Activated CD4-positive, alpha-beta T cell treated with anti-CD3 and anti-CD28 coated beads, Interleukin-2, amount 10 ng/mL, durations not matched to agents 7 days and 5 days (primary cell): ENCODE measurements at regions of chr11 and their contacts with region 1.

Region 1: DNA sequence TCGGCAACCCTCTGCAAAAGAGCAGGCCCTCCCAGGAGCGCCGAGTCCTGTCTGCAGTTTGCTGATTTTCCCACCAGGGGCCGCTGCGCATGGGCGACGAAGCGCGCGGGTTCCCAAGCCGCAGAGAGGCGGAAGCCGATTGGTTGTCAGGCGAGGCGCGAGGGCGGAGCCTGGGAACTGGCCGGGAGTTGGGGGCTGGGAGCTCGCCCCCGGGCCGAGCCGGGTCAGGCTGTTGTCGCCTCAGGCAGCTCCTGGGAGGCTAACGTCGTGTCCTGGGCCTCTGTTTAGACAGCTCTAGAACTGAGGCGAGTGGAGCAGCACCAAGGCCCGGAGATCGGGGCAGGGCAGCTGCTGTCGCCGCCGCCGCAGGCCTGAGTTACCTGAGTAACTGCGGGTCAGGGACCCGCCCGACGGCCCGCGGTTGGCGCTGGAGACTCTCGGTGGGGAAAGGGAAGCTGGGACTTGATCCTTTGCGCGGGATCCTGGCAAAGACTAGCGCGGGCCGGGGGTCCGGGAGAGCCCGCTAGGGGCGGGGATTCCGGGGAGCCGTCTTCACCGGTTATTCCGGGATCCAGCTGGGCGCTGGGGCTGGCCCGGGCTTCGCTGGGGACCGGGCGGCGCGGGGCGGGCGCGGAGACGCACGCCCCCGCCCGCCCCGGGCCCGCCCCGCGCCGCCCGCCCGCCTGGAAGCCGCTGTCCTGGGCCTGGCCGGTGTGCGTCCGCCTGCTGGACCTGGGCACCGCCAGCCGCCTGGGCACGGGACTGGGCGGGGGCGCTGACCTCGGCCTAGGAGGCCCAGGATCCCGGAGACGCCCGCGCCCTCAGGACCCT is at the start of gene STIM1:
- DNase-seq: peak; percentile 96
- H3K4me3 Mint-ChIP-seq: peak within 1 kb of the TSS; percentile 98
- H3K27ac Mint-ChIP-seq: peak within 1 kb of the TSS; percentile 99
- H3K4me1 Mint-ChIP-seq: peaks cover 56% of the 10 kb centered on the region
- H3K27me3 Mint-ChIP-seq: no peaks in the 10 kb centered on the region
- total RNA-seq, gene STIM1: 103 to 108 TPM

Region 2: DNA sequence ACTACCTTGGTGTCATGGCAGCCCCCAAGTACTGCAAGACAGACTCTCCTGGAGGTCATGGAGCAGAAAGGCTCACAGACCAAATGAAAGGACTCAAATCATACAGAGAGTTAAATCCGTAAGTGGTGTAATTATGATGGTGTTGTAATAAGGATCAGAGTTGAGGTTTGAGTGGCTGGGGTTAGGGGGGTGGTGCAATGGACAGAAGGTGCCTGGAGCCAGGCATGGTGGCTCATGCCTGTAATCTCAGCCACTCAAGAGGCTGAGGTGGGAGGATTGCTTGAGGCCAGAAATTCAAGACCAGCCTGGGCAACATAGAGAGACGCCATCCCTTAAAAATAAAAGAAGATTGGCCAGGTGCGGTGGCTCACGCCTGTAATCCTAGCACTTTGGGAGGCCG is 232.1 kb before region 1 on chr11:
- CTCF ChIA-PET with region 1: no interaction called
- POLR2A ChIA-PET with region 1: no interaction called
- DNase-seq: no peak
- H3K4me3 Mint-ChIP-seq: no peak overlapping the region
- H3K27ac Mint-ChIP-seq: no peak overlapping the region
- H3K4me1 Mint-ChIP-seq: no peaks in the 10 kb centered on the region
- H3K27me3 Mint-ChIP-seq: no peaks in the 10 kb centered on the region

Region 3: DNA sequence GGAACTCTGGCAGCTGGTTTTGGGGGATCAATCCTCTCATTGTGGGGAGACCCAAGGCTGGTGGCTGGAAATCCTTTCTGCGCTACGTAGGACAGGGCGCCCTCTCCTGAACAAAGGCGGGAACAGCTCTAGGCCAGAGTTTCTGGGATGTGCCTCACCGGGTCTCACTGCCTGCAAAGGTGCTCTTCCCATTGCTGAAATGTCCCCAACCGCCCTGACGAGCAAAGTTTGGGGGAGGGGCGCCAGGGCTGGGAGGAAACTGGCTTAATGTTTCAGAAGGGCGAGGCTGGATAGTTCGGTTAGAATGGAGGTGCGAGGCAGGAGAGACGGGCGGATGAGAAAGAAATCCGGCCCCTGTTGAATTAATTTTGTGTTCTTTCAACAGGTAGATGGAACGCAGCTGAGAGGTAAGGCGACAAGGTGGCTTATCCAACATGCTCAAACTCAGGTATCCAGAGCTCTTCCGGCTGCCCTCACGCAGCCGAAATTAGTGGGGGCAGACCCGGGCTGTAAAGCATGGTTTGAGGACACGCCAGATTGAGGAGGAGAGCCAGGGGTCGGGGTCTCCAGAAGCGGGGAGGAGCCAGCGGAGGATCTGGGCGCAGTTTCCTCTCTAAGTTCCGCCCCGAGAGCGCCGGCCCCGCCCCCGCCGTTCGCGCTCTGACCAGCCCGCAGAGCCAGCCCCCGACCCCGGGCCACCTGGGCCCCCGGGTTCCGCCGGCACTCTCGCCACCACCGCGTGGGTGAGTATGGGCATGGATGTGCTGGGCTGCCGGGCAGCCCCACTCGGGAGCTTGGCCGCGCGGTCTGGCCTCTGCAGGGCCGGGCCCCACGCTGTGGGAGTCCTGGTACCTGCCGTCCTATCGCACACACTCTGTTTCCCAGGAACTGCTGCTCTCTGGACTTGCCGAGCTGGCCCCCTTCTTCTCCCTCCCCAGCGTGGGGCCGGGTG is 47.0 kb before region 1 on chr11 and contains the start of gene PGAP2:
- CTCF ChIA-PET with region 1: interaction called, 13 read pairs
- POLR2A ChIA-PET with region 1: no interaction called
- DNase-seq: peak; percentile 67
- H3K4me3 Mint-ChIP-seq: peak within 1 kb of the TSS; percentile 86
- H3K27ac Mint-ChIP-seq: peak within 1 kb of the TSS; percentile 90
- H3K4me1 Mint-ChIP-seq: peaks cover 26% of the 10 kb centered on the region
- H3K27me3 Mint-ChIP-seq: no peaks in the 10 kb centered on the region
- total RNA-seq, gene PGAP2: 30.0 to 30.9 TPM

Region 4: DNA sequence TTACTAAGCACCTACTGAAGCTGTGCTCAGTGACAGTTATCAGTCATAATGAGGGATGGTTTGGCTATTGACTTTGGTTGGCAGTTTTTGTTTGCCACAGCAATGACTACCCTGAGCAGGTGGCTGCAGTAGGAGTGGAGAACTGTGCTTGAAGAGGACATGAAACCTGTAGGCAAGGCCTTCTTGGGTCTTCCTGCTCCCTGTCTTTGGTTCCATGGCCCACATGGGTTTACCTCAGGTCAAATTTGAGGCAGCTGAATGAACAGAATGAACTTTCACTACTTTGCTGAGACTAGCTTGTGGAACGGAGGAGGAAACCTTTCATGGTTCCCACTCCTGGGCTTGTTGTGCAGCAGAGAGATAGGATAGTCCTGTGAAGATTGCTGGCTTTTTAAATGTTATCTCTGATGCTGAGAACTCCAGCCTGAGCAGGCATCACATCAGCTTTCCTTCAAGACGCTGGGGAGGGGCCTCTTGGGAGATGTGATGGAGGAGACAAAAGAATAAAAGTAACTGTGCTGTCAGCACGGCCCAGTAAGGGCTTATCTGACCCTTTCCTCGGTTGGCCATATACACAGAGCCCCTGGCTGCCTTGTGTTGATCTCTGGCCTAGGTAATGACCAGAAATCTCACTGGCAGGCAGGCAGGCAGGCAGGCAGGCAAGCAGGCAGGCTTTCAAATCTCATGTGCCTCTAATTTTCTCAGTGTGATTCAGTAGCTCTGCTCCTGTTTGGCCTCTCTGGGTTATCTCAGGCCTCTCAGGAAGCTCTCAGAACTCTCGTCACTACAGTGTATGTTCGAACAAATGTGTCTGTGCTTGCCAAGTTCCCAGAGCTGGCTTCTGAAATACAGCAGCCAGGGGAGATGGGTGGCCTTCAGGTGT is 12.3 kb after region 1 on chr11:
- CTCF ChIA-PET with region 1: interaction called, 56 read pairs
- POLR2A ChIA-PET with region 1: no interaction called
- DNase-seq: no peak
- H3K4me3 Mint-ChIP-seq: no peak overlapping the region
- H3K27ac Mint-ChIP-seq: peak overlapping the region; percentile 68
- H3K4me1 Mint-ChIP-seq: peaks cover 82% of the 10 kb centered on the region
- H3K27me3 Mint-ChIP-seq: no peaks in the 10 kb centered on the region

Region 5: GRCh38 chr11:3894128-3894731 is 39.0 kb after region 1 on chr11:
- CTCF ChIA-PET with region 1: interaction called, 14 read pairs
- POLR2A ChIA-PET with region 1: no interaction called
- DNase-seq: no peak
- H3K4me3 Mint-ChIP-seq: no peak overlapping the region
- H3K27ac Mint-ChIP-seq: peak overlapping the region; percentile 64
- H3K4me1 Mint-ChIP-seq: peaks cover 36% of the 10 kb centered on the region
- H3K27me3 Mint-ChIP-seq: no peaks in the 10 kb centered on the region

Region 6: DNA sequence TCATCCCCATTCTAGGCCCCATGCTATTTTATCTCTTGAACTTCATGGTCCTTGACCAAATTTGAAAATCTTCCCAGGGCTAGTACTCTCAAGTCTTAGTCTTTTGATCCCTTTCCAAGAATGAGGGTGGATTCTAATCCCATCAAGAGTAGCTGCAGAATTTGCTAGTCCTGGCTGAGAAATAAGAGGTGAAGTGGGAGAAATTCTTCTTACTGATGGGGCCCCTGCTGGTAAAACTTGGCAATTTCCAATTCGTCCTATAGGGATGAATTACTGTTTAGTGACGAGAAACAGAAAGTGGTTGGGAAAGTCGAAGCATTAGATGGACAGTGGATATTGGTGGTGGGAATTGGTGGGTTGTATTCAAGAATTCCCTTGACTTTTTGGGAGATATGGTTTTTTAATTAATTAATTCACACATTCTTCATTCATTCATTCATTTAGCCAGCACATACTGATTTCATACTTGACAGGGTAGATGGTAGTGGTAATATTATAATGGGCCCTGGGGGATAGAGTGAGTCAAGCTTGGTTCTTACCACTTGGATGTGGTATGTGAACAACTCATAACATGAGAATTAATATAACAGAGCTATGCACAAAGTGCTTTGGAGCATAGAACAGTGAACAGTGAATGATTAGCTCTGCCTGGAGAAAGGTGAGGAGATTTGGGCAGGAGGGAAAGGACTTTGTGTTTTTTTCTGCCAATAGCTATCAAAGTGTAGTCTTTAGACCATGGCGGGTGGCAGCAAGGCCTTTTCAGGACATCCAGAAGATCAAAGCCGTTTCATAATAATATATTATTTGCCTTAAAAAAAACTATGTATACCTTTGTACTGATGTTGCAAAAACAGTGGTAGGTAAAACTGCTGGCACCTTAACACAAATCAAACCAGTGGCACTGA is 104.1 kb after region 1 on chr11:
- CTCF ChIA-PET with region 1: interaction called, 15 read pairs
- POLR2A ChIA-PET with region 1: interaction called, 3 read pairs
- DNase-seq: no peak
- H3K4me3 Mint-ChIP-seq: no peak overlapping the region
- H3K27ac Mint-ChIP-seq: peak overlapping the region; percentile 21
- H3K4me1 Mint-ChIP-seq: peaks cover 74% of the 10 kb centered on the region
- H3K27me3 Mint-ChIP-seq: no peaks in the 10 kb centered on the region

Region 7: DNA sequence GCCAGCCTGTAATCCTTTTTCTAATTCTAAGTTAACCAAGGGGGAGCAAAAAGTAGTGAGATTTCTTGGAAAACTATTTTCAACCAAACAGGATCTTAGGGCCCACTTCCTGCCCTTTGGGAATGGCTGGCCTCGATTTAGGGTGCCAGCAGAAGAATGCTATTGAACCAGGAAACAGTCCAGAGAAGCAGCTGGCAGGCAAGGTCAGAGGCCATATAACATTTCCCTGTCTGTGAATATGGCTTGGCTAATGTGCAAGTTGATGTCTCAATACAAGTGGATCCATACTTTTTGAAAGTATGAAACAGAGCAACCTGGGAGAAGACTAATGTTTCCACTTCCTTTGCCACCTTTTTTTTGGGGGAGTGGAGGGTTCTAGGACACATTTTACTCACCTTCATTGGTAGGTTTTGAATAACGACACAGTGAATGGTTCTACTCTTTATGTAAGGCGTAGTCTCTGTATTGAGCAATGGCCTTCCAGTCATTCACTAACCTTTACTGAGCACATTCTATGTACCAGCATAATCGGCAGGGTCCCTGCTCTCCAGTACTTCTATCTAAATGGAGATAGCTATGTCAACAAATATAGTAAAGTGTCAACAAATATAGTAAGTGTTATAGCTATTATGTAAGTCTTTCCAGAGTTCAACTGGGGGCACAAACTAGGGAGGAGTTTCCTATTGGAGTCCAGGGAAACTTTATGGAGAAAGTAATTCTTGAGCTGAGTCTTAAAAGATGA is 205.2 kb after region 1 on chr11:
- CTCF ChIA-PET with region 1: interaction called, 214 read pairs
- POLR2A ChIA-PET with region 1: interaction called, 3 read pairs
- DNase-seq: no peak
- H3K4me3 Mint-ChIP-seq: no peak overlapping the region
- H3K27ac Mint-ChIP-seq: no peak overlapping the region
- H3K4me1 Mint-ChIP-seq: peaks cover 37% of the 10 kb centered on the region
- H3K27me3 Mint-ChIP-seq: no peaks in the 10 kb centered on the region

Region 8: GRCh38 chr11:4087551-4087950 is 232.4 kb after region 1 on chr11:
- CTCF ChIA-PET with region 1: interaction called, 12 read pairs
- POLR2A ChIA-PET with region 1: no interaction called
- DNase-seq: no peak
- H3K4me3 Mint-ChIP-seq: no peak overlapping the region
- H3K27ac Mint-ChIP-seq: peak overlapping the region; percentile 69
- H3K4me1 Mint-ChIP-seq: peaks cover 67% of the 10 kb centered on the region
- H3K27me3 Mint-ChIP-seq: no peaks in the 10 kb centered on the region